Sciatic nerve (tissue), 2 donors: ENCODE measurements at regions of chrX and their contacts with region 1.

Region 1: DNA sequence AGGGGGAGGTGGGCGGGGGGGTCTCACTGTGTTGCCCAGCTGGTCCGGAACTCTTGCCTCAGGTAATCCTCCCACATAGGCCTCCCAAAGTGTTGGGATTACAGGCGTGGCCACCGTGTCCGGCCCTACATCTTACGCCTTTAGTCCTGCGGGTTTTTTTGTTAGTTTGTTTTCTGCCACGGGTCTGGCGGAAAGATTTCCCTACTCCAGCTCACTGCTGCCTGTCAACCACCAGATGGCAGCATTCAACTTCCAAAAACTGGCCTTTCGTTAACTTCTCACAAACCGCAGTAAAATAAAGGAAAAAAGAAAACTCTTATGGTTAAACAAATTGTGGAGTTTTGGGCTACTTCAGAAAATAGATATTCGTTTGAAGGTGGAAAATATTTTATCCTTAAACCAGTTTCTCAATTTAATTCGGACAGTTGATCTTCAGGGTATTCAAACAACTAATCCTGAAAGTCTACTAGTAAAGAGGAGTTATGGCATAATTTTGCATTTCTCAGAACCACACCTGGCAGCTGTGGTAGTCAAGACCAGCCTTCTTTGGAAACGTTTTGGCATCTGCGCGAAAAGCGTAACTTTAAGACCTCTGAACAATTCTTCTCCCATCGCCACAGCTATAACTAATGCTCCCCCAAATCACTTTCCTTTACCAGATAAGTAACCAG is 41.1 kb downstream of the LUZP4 start:
- DNase-seq: no peak
- ATAC-seq: peak; percentile 82

Region 2: GRCh38 chrX:115393271-115393670 is 62.6 kb after region 1 on chrX:
- intact Hi-C with region 1: no loop called
- DNase-seq: no peak
- ATAC-seq: no peak

Region 3: DNA sequence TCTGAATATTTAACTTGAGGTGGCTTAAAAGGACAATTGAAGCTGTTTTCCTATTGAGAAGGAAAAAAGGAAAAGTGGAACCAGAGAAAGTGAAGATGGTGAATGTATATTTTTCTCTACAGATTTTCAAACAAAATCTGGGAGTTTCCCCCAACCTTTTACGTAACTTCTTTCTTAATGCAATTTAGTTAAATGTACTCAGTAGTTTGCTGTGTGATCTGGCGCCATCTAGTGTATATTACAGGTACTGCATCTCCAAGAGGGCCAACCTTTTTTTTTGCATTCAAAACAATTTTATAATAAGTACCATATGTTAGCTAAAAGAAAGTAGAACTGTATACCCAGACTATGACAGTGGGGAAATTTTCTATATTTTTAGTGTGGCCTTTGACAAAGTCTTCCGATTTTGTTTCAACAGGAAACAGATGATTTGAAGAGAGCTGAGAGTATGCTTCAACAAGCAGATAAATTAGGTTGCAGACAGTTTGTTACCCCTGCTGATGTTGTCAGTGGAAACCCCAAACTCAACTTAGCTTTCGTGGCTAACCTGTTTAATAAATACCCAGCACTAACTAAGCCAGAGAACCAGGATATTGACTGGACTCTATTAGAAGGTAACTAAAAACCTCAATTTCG is 312.4 kb after region 1 on chrX:
- intact Hi-C with region 1: loop called (anchors 10 kb)
- DNase-seq: no peak
- ATAC-seq: peak; percentile 70